ENCODE measurements at regions of chr12 and their contacts with region 1.

Region 1: GRCh38 chr12:85448548-85449139 is 168.6 kb downstream of the ALX1 start:
- DNase-seq: no peak
- ATAC-seq: peak; percentile 65
- H3K4me3 ChIP-seq: no peak overlapping the region
- H3K27ac ChIP-seq: no peak overlapping the region
- H3K4me1 ChIP-seq: no peaks in the 10 kb centered on the region
- H3K27me3 ChIP-seq: no peaks in the 10 kb centered on the region
- CTCF ChIP-seq: peak; percentile 42 to 57 (median 50); a peak in 4 of 6 replicates
- POLR2A ChIP-seq: no peak
- RAD21 ChIP-seq: peak; percentile 67

Region 2: GRCh38 chr12:84874125-84874824 is 574.4 kb before region 1 on chr12:
- CTCF ChIA-PET with region 1: no interaction called
- POLR2A ChIA-PET with region 1: no interaction called
- RAD21 ChIA-PET with region 1: no interaction called
- intact Hi-C with region 1: loop called (anchors 2 kb)
- DNase-seq: peak; percentile 55
- ATAC-seq: peak; percentile 84
- H3K4me3 ChIP-seq: no peak overlapping the region
- H3K27ac ChIP-seq: no peak overlapping the region
- H3K4me1 ChIP-seq: no peaks in the 10 kb centered on the region
- H3K27me3 ChIP-seq: no peaks in the 10 kb centered on the region
- CTCF ChIP-seq: peak; percentile 58 to 84 (median 80)
- POLR2A ChIP-seq: no peak
- RAD21 ChIP-seq: peak; percentile 88

Region 3: DNA sequence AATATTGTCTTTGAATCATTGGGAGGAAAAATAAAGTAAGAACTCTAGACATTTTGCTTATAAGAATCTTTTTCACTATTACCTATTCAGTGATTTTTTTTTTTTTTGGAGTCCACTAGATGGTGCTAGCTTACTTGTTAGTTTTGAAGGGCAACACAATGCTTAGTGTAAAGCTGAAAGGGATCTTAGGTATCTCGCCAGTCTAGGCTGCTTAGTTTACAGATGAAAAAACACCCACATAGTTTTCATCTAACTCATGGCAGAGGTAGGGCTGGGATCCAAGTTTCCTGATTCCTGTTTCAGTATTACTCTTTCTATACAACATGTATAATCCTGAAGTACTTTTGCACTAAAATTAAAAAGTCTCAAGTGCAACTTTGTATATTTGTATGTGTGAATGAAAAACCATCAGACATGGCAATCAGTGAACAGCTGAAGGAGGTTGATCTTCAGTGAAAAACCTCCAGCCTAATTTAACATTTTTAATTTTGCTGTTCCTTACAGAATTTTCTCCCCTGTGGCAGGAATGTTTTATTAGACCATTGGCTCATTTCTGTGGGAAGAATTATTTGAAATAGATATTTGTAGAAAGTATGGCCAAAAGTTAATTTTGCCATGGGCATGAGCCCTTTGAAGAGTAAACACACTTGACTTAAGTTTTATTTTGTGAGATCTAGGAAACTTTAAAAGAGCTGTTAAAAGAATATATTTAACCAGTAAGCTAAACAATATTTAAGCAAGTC is 371.8 kb before region 1 on chr12:
- CTCF ChIA-PET with region 1: interaction called, 26 read pairs
- POLR2A ChIA-PET with region 1: no interaction called
- RAD21 ChIA-PET with region 1: interaction called in 1 of 2 experiments, 3 read pairs
- intact Hi-C with region 1: loop called (anchors 1 kb)
- DNase-seq: peak; percentile 81
- ATAC-seq: peak; percentile 99
- H3K4me3 ChIP-seq: no peak overlapping the region
- H3K27ac ChIP-seq: no peak overlapping the region
- H3K4me1 ChIP-seq: peaks cover 0 to 5% of the 10 kb centered on the region in 2 experiments; a peak in 1 of 4 replicates
- H3K27me3 ChIP-seq: no peaks in the 10 kb centered on the region
- CTCF ChIP-seq: peak; percentile 45 to 66 (median 49); a peak in 5 of 6 replicates
- POLR2A ChIP-seq: no peak
- RAD21 ChIP-seq: peak; percentile 77

Region 4: DNA sequence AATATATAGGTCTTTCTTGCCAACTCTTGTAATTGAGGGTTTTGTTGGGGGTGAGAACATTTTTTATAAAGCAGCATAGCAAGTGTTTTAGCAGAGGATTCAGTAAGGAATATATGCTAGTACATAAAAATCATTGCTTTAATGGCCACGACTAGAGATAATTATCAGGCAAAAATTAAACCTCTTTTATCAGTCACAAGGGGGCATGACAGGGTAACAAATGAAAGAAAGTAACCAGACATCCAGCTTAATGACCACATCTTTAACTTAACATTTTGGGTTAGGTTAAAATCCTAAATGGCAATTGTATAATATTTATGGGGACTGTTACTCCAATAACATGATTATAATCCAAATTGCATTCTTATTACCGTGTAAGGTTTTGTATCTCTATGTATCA is 292.9 kb before region 1 on chr12:
- CTCF ChIA-PET with region 1: interaction called, 32 read pairs
- POLR2A ChIA-PET with region 1: no interaction called
- RAD21 ChIA-PET with region 1: no interaction called
- intact Hi-C with region 1: loop called (anchors 1 kb)
- DNase-seq: peak; percentile 31
- ATAC-seq: peak; percentile 63
- H3K4me3 ChIP-seq: no peak overlapping the region
- H3K27ac ChIP-seq: no peak overlapping the region
- H3K4me1 ChIP-seq: no peaks in the 10 kb centered on the region
- H3K27me3 ChIP-seq: no peaks in the 10 kb centered on the region
- CTCF ChIP-seq: peak; percentile 29 to 62 (median 42); a peak in 4 of 6 replicates
- POLR2A ChIP-seq: no peak
- RAD21 ChIP-seq: peak; percentile 67

Region 5: DNA sequence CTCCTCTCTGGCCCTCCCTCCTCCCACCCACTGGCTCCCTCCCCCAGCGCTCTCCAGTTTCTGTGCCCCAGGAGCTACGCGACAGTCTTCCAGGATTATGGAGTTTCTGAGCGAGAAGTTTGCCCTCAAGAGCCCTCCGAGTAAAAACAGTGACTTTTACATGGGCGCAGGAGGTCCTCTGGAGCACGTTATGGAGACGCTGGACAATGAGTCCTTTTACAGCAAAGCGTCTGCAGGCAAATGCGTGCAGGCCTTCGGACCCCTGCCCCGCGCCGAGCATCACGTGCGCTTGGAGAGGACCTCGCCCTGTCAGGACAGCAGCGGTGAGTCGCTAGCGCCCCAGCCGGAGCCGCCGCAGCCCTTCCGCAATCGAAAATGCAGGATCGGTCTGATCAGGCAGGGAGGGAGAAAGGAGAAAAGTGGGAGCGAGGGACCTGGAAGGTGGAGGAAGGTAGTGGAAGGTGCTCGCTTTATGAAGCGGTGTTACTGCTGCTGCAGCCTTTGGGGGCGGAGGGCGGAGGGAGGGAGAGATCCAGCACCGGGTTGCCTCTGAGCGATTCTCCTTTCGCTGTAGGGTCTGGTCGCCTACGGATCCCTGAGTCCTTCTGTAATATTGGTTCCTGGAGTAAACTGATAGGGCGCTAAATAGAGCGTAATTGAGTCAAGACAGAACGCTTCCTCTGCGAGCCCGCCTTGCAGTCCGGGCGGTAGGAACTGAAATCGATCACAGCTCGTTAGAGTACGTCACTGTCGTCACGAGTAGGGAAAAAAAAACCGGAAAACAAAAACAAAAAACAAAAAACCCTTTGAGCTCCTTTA is 168.3 kb before region 1 on chr12 and contains the start of gene ALX1:
- CTCF ChIA-PET with region 1: no interaction called
- POLR2A ChIA-PET with region 1: no interaction called
- RAD21 ChIA-PET with region 1: no interaction called
- intact Hi-C with region 1: no loop called
- DNase-seq: no peak
- ATAC-seq: no peak
- H3K4me3 ChIP-seq: no peak within 1 kb of the TSS
- H3K27ac ChIP-seq: no peak within 1 kb of the TSS
- H3K4me1 ChIP-seq: no peaks in the 10 kb centered on the region
- H3K27me3 ChIP-seq: no peaks in the 10 kb centered on the region
- CTCF ChIP-seq: no peak
- POLR2A ChIP-seq: no peak
- RAD21 ChIP-seq: no peak
- total RNA-seq, gene ALX1: not detected

Region 6: DNA sequence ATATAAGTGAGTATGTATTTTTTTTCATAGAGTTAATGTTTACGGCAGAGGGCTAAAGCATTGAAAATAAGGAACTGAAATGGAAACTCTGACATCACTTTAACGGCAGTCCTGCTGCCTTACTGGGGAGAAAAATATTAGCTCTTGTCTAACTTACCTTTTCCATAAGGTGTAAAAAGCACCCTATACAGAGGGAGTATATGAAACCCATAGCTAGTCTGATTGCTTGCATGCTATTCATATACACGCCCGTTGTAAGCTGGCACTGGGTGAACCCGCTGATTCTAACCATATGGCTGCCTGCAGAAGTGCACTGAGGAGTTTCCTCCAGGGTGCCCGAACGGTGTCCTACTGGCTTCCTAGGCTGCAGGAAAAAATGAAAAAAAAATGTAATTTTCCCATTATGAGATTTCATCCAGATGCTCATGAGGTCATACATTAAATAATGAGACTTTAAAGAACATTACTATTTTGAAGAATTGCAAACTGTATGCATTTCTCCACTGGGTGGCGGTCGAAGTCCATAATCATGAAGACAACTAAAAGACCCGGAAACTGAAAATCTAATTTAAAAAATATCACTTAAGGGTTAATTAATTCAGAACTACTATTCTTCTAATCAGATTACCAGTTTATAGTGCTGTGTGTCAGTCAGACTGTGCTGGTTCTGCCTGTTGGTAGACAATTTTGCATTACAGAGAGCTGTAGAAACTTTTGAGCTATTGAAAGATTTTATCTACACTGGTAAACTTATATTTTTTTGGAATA is 23.9 kb before region 1 on chr12:
- CTCF ChIA-PET with region 1: interaction called, 11 read pairs
- POLR2A ChIA-PET with region 1: no interaction called
- RAD21 ChIA-PET with region 1: no interaction called
- intact Hi-C with region 1: no loop called
- DNase-seq: peak; percentile 21
- ATAC-seq: peak; percentile 49; the same call in 1 of the 2 replicates
- H3K4me3 ChIP-seq: no peak overlapping the region
- H3K27ac ChIP-seq: no peak overlapping the region
- H3K4me1 ChIP-seq: no peaks in the 10 kb centered on the region
- H3K27me3 ChIP-seq: no peaks in the 10 kb centered on the region
- CTCF ChIP-seq: peak; percentile 36 to 66 (median 47); a peak in 5 of 6 replicates
- POLR2A ChIP-seq: no peak
- RAD21 ChIP-seq: peak; percentile 58